ENCODE measurements at regions of chr19 and their contacts with region 1.

Region 1: DNA sequence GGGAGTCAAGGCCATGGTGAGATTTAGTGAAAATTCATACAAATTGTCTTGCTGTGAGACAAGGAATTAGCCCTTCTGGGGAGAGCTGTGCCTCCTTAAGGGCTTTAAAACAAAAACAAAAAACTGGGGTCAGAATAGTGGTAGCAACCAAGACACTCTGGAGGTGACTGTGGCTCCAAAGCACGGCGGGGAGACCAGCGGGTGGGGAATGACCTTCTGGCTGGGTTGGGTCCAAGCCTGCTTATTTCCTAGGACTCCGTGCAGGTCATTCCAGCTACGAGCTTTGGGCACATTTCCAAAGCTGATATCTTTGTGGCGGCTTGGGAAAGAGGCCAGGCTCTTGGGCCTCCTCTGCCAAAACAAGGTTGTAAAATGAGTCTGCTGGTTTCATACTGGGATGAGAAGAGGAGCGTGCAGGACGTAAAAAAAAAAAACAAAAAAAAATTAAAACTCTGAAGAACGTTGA is 348.3 kb downstream of the UQCRFS1 start:
- DNase-seq: no peak
- ATAC-seq: no peak
- H3K4me3 ChIP-seq: no peak overlapping the region
- H3K27ac ChIP-seq: no peak overlapping the region
- H3K4me1 ChIP-seq: no peaks in the 10 kb centered on the region
- CTCF ChIP-seq: no peak
- EP300 ChIP-seq: no peak
- POLR2A ChIP-seq: no peak
- RAD21 ChIP-seq: no peak

Region 2: DNA sequence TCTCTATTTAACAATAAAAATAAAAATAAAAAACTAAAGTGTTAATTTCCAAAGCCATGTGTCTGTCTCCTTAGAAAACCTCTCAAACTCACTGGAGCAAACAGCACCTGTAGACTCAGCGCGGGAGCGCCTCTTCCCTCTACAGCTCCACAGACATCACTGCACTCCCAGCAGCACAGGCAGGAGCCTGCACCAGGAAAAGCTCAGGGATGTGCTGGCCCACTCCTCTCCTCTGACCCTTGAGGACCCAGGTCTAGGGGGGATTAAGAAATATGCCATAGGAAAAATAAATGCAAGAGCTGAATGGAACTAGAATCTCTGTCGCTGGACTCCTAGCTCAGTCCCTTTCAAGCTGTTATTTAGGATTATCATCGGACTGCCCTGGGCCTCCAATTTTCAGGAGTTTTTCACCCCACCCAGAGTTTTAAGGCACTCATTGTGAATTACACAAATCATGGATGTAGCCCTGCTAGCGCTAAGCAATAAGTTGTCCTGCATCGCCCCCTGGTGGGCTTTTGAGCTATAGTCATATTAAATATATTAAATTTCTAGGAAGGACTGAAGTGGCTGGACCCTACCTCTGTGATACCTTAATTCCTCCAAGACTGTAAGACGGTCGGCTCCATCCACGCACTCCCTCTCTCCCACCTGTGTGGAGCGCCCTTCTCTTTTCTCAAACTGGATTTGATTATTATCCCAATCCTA is 14.4 kb after region 1 on chr19:
- CTCF ChIA-PET with region 1: interaction called, 15 read pairs
- POLR2A ChIA-PET with region 1: no interaction called
- DNase-seq: peak; percentile 79 to 83
- ATAC-seq: peak; percentile 36 to 90; a peak in 4 of 6 replicates
- H3K4me3 ChIP-seq: no peak overlapping the region
- H3K27ac ChIP-seq: no peak overlapping the region
- H3K4me1 ChIP-seq: no peaks in the 10 kb centered on the region
- CTCF ChIP-seq: peak; percentile 86
- EP300 ChIP-seq: no peak
- POLR2A ChIP-seq: no peak
- RAD21 ChIP-seq: peak; percentile 89 to 94

Region 3: DNA sequence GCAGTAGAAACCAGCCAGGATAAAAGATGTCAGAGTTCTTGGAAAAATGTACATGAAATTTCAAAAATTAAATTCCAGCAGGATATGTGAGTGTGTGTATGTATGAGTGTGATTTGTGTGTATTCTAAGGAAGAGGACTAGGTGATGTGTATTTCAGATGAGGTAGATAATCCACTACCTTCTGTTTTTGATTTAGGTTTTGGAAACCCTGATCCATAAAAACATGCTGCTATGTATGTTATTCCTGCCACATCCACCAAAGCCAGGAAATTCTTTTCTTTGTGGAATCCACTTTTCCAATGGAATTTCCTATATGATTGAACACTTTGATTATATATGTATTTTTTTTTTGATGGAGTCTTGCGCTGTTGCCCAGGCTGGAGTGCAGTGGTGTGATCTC is 71.4 kb after region 1 on chr19:
- CTCF ChIA-PET with region 1: no interaction called
- POLR2A ChIA-PET with region 1: no interaction called
- DNase-seq: no peak
- ATAC-seq: no peak
- H3K4me3 ChIP-seq: no peak overlapping the region
- H3K27ac ChIP-seq: no peak overlapping the region
- H3K4me1 ChIP-seq: no peaks in the 10 kb centered on the region
- CTCF ChIP-seq: no peak
- EP300 ChIP-seq: no peak
- POLR2A ChIP-seq: no peak
- RAD21 ChIP-seq: no peak